ENCODE measurements at regions of chr15 and their contacts with region 1.

Region 1: GRCh38 chr15:73704869-73705645 is 20.9 kb downstream of the CD276 start:
- DNase-seq: peak; percentile 43 to 78 (median 56)
- ATAC-seq: peak; percentile 78
- H3K4me3 ChIP-seq: no peak overlapping the region
- H3K4me3 Mint-ChIP-seq: no peak overlapping the region
- H3K27ac ChIP-seq: no peak overlapping the region
- H3K27ac Mint-ChIP-seq: no peak overlapping the region
- H3K4me1 ChIP-seq: no peaks in the 10 kb centered on the region
- H3K4me1 Mint-ChIP-seq: peaks cover 7% of the 10 kb centered on the region
- H3K27me3 ChIP-seq: peaks cover under 1 to 2% of the 10 kb centered on the region in 2 experiments
- H3K27me3 Mint-ChIP-seq: peaks cover 28% of the 10 kb centered on the region
- CTCF ChIP-seq: peak; percentile 72

Region 2: GRCh38 chr15:73677146-73677607 is 27.9 kb before region 1 on chr15:
- CTCF ChIA-PET with region 1: interaction called, 67 read pairs
- POLR2A ChIA-PET with region 1: interaction called, 6 read pairs
- intact Hi-C with region 1: loop called (anchors 1 kb)
- DNase-seq: peak; percentile 23 to 76 (median 43)
- ATAC-seq: peak; percentile 41
- H3K4me3 ChIP-seq: no peak overlapping the region
- H3K4me3 Mint-ChIP-seq: no peak overlapping the region
- H3K27ac ChIP-seq: no peak overlapping the region
- H3K27ac Mint-ChIP-seq: no peak overlapping the region
- H3K4me1 ChIP-seq: no peaks in the 10 kb centered on the region
- H3K4me1 Mint-ChIP-seq: no peaks in the 10 kb centered on the region
- H3K27me3 ChIP-seq: peaks cover 12 to 26% of the 10 kb centered on the region in 2 experiments
- H3K27me3 Mint-ChIP-seq: peaks cover 41% of the 10 kb centered on the region
- CTCF ChIP-seq: peak; percentile 86

Measured in CD4-positive, alpha-beta T cell (primary cell).